Naive thymus-derived CD4-positive, alpha-beta T cell (primary cell): ENCODE measurements at regions of chr15 and their contacts with region 1.

Region 1: DNA sequence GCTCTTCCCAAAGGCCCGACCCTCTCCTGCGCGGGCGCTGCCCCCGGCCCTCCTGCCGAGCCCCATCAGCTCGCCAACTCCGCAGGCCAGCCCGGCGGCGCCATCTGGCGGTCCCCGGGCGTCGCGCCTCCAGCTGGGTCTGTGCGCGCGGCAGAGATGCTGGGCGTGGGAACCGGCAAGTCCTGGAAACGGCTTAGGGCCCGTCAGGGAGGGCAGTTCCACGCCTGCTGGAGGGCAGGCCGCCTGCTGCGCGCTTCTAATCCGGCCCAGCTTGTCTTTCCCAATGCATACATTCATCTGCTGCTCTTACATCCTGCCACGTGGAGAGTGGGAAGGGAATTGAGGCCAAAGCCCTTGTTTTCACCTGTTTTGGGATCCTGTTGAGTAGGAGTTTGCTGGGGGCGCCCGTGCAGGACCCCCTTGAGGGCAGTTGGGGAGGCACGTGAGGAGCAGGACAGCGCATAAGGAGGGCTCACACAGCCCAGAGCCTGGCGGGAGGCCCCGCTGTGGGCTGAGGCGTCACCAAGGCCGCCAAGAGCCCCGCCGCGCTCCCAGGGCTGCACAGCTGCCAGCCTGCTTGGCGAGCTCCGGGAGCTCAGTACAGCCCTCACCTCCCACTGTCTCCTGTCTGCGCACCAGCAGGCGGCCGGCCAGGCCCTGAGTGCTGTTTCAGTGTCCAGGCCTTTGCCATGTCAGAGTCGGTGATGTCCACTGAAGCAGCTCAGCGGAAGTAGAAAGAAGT is 165.6 kb downstream of the NSMCE3 start:
- DNase-seq: peak; percentile 2 to 69 (median 47)
- ATAC-seq: peak; percentile 64
- H3K4me3 ChIP-seq: no peak overlapping the region
- H3K4me3 Mint-ChIP-seq: peak overlapping the region in 1 of 10 donors; percentile 6
- H3K27ac ChIP-seq: no peak overlapping the region
- H3K27ac Mint-ChIP-seq: peak overlapping the region in 4 of 9 donors; percentile 36 to 72 (median 52)
- H3K4me1 ChIP-seq: no peaks in the 10 kb centered on the region
- H3K4me1 Mint-ChIP-seq: peaks cover 0 to 12% (median 5%) of the 10 kb centered on the region in 7 donors
- H3K27me3 ChIP-seq: no peaks in the 10 kb centered on the region
- H3K27me3 Mint-ChIP-seq: no peaks in the 10 kb centered on the region

Region 2: GRCh38 chr15:29050870-29051269 is 53.1 kb before region 1 on chr15:
- CTCF ChIA-PET with region 1: no interaction called
- POLR2A ChIA-PET with region 1: no interaction called
- intact Hi-C with region 1: loop called in 1 of 2 experiments (anchors 5 kb)
- DNase-seq: no peak
- ATAC-seq: peak; percentile 73
- H3K4me3 ChIP-seq: no peak overlapping the region
- H3K4me3 Mint-ChIP-seq: no peak overlapping the region
- H3K27ac ChIP-seq: no peak overlapping the region
- H3K27ac Mint-ChIP-seq: peak overlapping the region in 2 of 9 donors; percentile 6 to 36
- H3K4me1 ChIP-seq: peaks cover 0 to 3% of the 10 kb centered on the region in 2 donors
- H3K4me1 Mint-ChIP-seq: peaks cover 6 to 81% (median 73%) of the 10 kb centered on the region in 7 donors
- H3K27me3 ChIP-seq: no peaks in the 10 kb centered on the region
- H3K27me3 Mint-ChIP-seq: no peaks in the 10 kb centered on the region

Region 3: GRCh38 chr15:29348336-29348914 is 244.4 kb after region 1 on chr15:
- CTCF ChIA-PET with region 1: no interaction called
- POLR2A ChIA-PET with region 1: no interaction called
- intact Hi-C with region 1: no loop called
- DNase-seq: no peak
- ATAC-seq: no peak
- H3K4me3 ChIP-seq: no peak overlapping the region
- H3K4me3 Mint-ChIP-seq: no peak overlapping the region
- H3K27ac ChIP-seq: no peak overlapping the region
- H3K27ac Mint-ChIP-seq: no peak overlapping the region
- H3K4me1 ChIP-seq: no peaks in the 10 kb centered on the region
- H3K4me1 Mint-ChIP-seq: no peaks in the 10 kb centered on the region
- H3K27me3 ChIP-seq: no peaks in the 10 kb centered on the region
- H3K27me3 Mint-ChIP-seq: peaks cover 0 to 16% (median 10%) of the 10 kb centered on the region in 5 donors